ENCODE measurements at regions of chr6 and their contacts with region 1.

Region 1: DNA sequence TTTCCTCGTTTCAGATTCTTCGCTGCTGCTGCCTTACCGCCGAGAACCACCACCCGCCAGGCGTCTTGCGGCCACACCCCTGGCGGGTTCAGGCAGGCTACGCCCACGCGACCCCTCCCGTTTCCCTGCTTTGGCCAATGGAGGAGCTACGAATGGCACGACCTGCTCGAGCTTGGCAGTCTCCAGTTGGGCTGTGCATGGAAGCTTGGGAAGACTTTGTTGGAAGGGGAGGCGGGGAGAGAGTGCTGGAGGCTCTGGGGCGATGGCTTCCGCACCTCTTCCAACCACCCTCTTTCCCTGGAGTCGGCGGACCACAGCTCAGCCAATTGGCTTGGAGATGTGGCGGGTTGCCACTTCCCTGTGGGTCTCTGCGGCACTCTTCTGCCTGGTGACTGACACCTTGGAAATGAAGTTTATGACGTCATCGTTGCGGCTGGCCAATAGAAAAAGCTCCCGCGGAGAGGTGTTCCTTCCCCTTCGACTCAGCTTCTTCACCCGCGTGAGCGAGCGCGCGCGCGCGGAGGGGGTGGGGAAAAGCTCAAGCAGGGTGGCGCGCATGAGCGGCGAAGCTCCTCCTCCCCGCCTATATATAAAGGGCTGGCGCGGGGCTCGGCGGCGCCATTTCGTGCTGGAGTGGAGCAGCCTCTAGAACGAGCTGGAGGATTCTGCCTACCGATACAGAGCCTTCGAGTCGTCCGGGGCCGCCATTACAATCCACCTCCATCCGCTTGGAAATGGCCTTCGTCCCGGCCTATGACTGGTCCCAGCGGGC is 3.4 kb downstream of the BRD2 start:
- DNase-seq: peak; percentile 100
- ATAC-seq: peak; percentile 48 to 76 (median 62)
- H3K4me3 ChIP-seq: peak overlapping the region; percentile 91
- H3K4me3 Mint-ChIP-seq: peak overlapping the region; percentile 96
- H3K27ac ChIP-seq: peak overlapping the region; percentile 92
- H3K27ac Mint-ChIP-seq: peak overlapping the region; percentile 91 to 97
- H3K4me1 ChIP-seq: peaks cover 39% of the 10 kb centered on the region
- H3K4me1 Mint-ChIP-seq: peaks cover 77 to 85% of the 10 kb centered on the region in 2 donors
- H3K27me3 ChIP-seq: no peaks in the 10 kb centered on the region
- H3K27me3 Mint-ChIP-seq: no peaks in the 10 kb centered on the region
- CTCF ChIP-seq: no peak

Region 2: DNA sequence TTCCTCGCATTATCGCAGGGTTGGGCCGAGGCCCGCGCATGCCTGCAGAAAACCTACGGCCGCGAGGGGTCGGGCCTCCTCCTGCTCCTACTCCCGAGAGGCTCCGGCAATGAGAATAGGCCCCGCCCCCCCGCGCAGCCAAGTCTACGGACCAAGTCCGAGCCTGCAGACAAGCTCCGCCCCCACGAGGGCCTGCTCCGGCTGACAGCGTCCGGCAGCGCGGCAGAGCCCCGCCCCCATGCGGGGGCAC is 776.2 kb before region 1 on chr6:
- intact Hi-C with region 1: loop called (anchors 5 kb)
- DNase-seq: peak; percentile 99
- ATAC-seq: peak; percentile 79 to 94 (median 82)
- H3K4me3 ChIP-seq: no peak overlapping the region
- H3K4me3 Mint-ChIP-seq: peak overlapping the region; percentile 98
- H3K27ac ChIP-seq: peak overlapping the region; percentile 100
- H3K27ac Mint-ChIP-seq: peak overlapping the region; percentile 99
- H3K4me1 ChIP-seq: peaks cover 61% of the 10 kb centered on the region
- H3K4me1 Mint-ChIP-seq: peaks cover 46 to 67% of the 10 kb centered on the region in 2 donors
- H3K27me3 ChIP-seq: no peaks in the 10 kb centered on the region
- H3K27me3 Mint-ChIP-seq: no peaks in the 10 kb centered on the region
- CTCF ChIP-seq: peak; percentile 36

Region 3: GRCh38 chr6:32843979-32844838 is 127.6 kb before region 1 on chr6 and contains the start of gene PSMB8:
- intact Hi-C with region 1: loop called (anchors 2 kb)
- DNase-seq: peak; percentile 98 to 99
- ATAC-seq: peak; percentile 81 to 93 (median 85)
- H3K4me3 ChIP-seq: peak within 1 kb of the TSS; percentile 97
- H3K4me3 Mint-ChIP-seq: peak within 1 kb of the TSS; percentile 100
- H3K27ac ChIP-seq: peak within 1 kb of the TSS; percentile 99
- H3K27ac Mint-ChIP-seq: peak within 1 kb of the TSS; percentile 96 to 100
- H3K4me1 ChIP-seq: peaks cover 72% of the 10 kb centered on the region
- H3K4me1 Mint-ChIP-seq: peaks cover 90 to 97% of the 10 kb centered on the region in 2 donors
- H3K27me3 ChIP-seq: no peaks in the 10 kb centered on the region
- H3K27me3 Mint-ChIP-seq: no peaks in the 10 kb centered on the region
- CTCF ChIP-seq: no peak
- total RNA-seq, gene PSMB8: 160 to 170 (median 161) TPM

Region 4: DNA sequence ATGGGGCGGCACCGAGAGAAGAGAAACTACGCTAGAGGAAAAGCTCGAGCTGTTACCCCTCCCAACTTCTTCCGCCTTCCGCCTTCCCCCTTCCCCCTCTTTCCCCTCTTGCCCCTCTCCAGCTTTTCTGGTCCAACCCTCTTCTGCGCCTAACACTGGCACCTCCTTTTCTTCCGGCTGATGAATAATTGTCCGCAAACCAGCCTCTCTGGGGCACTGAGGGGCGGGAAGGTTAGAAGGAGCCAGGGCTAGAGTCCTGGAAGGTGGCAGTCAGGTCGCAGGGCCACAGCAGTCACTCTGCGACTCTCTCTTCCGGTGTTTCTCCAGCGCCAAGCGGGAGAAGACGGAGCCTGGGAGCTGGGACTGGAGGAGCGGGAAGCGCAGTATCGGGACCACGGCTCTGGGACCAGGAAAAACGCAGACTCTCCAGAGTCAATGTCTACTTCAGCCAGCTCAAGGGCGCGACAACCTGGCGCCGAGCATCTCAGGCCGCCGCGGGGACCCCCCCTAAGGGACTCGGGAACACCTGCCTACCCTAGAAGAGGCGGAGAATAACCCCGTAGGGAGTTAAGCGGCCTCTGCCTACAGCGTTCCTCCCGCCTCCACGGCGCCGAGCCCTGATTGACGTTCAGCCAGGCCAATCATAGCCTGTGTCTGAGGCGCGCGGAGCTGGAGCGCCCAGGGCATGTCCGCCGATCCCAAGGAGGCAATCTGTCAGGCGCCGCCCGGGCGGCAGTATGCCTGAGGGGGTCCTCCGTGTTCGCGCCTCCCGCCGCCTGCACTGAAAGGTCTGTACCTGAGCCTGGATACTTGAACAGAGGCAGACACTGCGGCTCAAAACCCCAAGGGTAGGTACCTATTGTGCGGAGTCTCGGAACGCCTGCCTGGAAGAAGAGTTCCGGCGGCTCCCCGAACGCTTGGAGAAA is 77.4 kb before region 1 on chr6:
- intact Hi-C with region 1: loop called (anchors 2 kb)
- DNase-seq: peak; percentile 94 to 97
- ATAC-seq: peak; percentile 97 to 99 (median 98)
- H3K4me3 ChIP-seq: peak overlapping the region; percentile 88
- H3K4me3 Mint-ChIP-seq: peak overlapping the region; percentile 98
- H3K27ac ChIP-seq: peak overlapping the region; percentile 95
- H3K27ac Mint-ChIP-seq: peak overlapping the region; percentile 91 to 97
- H3K4me1 ChIP-seq: peaks cover 26% of the 10 kb centered on the region
- H3K4me1 Mint-ChIP-seq: peaks cover 42 to 47% of the 10 kb centered on the region in 2 donors
- H3K27me3 ChIP-seq: no peaks in the 10 kb centered on the region
- H3K27me3 Mint-ChIP-seq: no peaks in the 10 kb centered on the region
- CTCF ChIP-seq: no peak

Region 5: DNA sequence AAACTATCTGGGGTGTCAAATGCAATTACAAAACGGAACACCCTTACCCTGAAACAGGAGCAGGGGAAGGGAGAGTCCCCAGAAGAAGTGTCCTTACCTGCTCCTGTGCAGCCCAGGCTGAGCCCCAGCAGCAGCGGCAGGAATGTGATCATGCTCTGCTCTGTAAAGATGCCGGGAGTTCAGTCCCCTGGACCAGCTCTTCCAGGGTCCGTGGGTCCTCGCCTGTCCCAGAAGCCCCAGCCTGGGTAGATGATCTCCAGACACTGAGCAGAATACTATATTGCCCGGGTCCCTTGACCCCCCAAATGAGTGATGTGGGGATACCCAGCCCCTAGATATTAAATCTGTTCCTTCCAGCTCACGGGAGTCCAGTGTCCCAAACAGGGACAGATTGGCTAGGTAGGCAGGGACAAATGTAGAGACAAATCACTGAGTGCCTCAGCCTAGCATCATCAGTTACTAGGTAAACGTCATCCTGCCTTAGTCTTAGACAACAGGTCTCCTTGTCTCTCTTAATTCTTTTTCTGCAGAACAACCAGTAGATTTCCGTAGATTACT is 31.0 kb before region 1 on chr6 and contains the start of gene HLA-DMB:
- intact Hi-C with region 1: loop called (anchors 1 kb)
- DNase-seq: peak; percentile 31 to 90
- ATAC-seq: peak; percentile 71 to 80 (median 78)
- H3K4me3 ChIP-seq: peak within 1 kb of the TSS; percentile 74
- H3K4me3 Mint-ChIP-seq: peak within 1 kb of the TSS; percentile 88
- H3K27ac ChIP-seq: peak within 1 kb of the TSS; percentile 96
- H3K27ac Mint-ChIP-seq: peak within 1 kb of the TSS; percentile 92 to 98
- H3K4me1 ChIP-seq: peaks cover 75% of the 10 kb centered on the region
- H3K4me1 Mint-ChIP-seq: peaks cover 59 to 60% of the 10 kb centered on the region in 2 donors
- H3K27me3 ChIP-seq: no peaks in the 10 kb centered on the region
- H3K27me3 Mint-ChIP-seq: no peaks in the 10 kb centered on the region
- CTCF ChIP-seq: no peak
- total RNA-seq, gene HLA-DMB: 19.5 to 28.1 (median 23.0) TPM

Region 6: DNA sequence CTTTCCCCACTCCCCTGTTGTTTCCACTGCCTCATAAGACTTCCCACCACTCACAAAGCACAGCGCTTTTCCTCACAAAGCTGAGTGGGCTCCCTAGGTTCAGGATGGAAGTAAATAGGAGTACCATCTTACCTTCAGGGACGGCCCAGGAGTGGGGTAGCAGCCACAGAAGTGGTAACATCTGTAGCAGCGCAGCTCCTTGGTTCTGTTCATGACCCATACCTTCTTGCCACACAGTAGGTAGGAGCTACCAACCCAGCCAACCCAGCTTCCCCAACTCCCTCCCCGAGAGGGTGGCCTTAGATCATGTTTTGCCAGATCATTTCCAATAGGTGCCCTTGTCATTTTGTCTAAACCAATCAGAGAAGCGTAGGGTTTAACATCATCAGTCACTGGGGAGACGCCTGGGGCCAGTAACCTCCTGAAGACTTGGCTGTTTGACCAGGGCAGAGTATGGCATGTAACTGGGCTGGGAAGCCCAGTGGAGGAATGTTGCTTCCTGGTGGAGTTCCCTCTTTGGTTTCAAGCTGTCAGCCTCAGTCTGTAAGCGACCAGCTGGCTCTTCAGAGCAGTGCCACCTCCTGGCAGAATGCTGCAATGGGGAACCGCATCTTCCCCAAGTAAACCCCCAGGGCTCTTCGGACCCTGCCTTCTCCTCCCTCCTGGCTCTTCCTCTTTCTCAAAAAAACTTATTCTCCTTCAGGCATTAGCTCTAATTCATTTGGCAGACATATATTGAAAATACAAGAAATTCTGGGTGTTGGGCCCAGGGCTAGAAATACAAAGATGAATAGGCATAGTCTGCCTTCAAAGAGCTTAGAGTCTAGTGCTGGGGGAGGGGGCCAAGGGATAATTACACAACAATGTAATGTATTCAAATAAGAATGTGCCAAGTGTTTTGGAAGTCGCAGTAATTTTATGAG is 18.7 kb before region 1 on chr6 and contains the start of gene HLA-DMA:
- intact Hi-C with region 1: loop called (anchors 1 kb)
- DNase-seq: peak; percentile 67 to 91
- ATAC-seq: peak; percentile 97 to 99 (median 97)
- H3K4me3 ChIP-seq: peak within 1 kb of the TSS; percentile 50
- H3K4me3 Mint-ChIP-seq: peak within 1 kb of the TSS; percentile 85
- H3K27ac ChIP-seq: peak within 1 kb of the TSS; percentile 77
- H3K27ac Mint-ChIP-seq: peak within 1 kb of the TSS; percentile 87 to 92
- H3K4me1 ChIP-seq: peaks cover 44% of the 10 kb centered on the region
- H3K4me1 Mint-ChIP-seq: peaks cover 31 to 32% of the 10 kb centered on the region in 2 donors
- H3K27me3 ChIP-seq: no peaks in the 10 kb centered on the region
- H3K27me3 Mint-ChIP-seq: no peaks in the 10 kb centered on the region
- CTCF ChIP-seq: peak; percentile 91
- total RNA-seq, gene HLA-DMA: 39.2 to 57.5 (median 48.1) TPM

Measured in natural killer cell (primary cell).